OCI-LY7 (cell line): ENCODE measurements at regions of chr19 and their contacts with region 1.

Region 1: GRCh38 chr19:40777937-40778705 is at the start of gene RAB4B:
- DNase-seq: peak; percentile 100
- H3K4me3 ChIP-seq: peak within 1 kb of the TSS; percentile 73
- H3K27ac ChIP-seq: peak within 1 kb of the TSS; percentile 95
- H3K4me1 ChIP-seq: peaks cover 37% of the 10 kb centered on the region
- CTCF ChIP-seq: no peak
- total RNA-seq, gene RAB4B: 32.2 and 37.1 TPM in 2 replicates

Region 2: DNA sequence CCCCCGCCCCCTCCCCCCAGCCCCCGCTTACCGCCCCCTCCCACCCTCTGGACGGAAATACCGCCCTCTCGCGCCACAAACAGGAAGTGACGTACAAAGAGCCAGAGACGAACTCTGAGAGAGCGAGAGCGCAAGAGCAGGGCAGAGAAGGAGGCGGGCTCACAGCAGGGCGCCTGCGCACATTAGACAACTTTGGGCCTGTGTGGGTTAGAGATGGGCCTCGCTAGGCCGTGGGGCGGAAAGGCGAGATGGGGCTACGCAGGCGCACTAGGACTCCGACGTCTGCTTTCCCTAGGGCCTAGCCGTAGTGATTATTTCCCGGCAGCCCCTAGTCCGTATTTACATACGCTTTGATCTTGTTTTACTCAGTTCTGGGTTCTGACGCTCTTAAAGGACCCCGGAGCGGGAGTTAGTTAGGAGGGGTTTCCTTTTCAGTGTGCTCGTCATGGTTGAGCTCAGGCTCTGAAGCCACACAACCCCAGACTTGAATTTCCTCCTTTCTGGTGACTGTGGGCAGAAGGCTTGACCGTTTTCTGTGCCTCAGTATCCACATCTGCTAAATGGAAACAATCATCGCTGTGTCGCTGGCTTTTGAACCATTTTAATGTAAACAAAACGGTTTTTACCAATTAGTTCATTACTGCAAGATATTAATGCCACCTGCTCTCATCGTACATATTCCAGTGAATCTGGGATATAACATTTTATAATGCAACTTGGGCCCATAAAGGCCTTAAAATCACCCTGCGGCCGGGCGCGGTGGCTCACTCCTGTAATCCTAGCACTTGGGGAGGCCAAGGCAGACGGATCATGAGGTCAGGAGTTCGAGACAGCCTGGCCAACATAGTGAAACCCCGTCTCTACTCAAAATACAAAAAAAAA is 492.5 kb before region 1 on chr19:
- CTCF ChIA-PET with region 1: interaction called, 12 read pairs
- POLR2A ChIA-PET with region 1: no interaction called
- intact Hi-C with region 1: no loop called
- DNase-seq: peak; percentile 100
- H3K4me3 ChIP-seq: peak overlapping the region; percentile 85
- H3K27ac ChIP-seq: peak overlapping the region; percentile 94
- H3K4me1 ChIP-seq: peaks cover 54% of the 10 kb centered on the region
- CTCF ChIP-seq: no peak

Region 3: GRCh38 chr19:40603389-40604135 is 174.6 kb before region 1 on chr19:
- CTCF ChIA-PET with region 1: no interaction called
- POLR2A ChIA-PET with region 1: interaction called, 4 read pairs
- intact Hi-C with region 1: loop called (anchors 10 kb)
- DNase-seq: peak; percentile 98
- H3K4me3 ChIP-seq: peak overlapping the region; percentile 66
- H3K27ac ChIP-seq: no peak overlapping the region
- H3K4me1 ChIP-seq: peaks cover 62% of the 10 kb centered on the region
- CTCF ChIP-seq: no peak

Region 4: DNA sequence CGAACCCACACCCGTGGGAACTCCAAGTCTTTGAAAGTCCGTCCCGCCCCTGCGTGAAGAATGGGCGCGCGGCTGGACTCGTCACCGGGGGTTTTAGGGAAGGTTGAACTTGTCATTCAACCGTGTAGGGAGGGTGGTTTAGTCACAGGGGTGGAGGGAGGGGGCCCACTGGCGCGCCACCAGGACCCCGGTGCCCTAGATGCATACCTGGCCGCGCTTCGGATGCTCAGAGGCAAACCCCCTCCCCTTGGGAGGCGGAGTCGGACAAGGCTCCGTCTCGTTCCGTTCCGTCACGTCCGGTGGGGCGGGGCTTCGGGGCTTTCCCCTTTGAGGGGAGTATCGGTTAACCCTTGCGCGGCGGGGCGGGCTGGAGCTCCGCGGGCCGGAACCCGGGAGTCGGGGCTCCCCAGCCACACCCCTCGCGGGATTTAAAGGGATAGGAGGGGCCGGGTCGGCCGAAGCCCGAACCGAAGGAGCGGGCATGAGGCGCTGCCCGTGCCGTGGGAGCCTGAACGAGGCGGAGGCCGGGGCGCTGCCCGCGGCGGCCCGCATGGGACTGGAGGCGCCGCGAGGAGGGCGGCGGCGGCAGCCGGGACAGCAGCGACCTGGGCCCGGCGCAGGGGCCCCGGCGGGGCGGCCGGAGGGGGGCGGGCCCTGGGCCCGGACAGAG is 61.3 kb before region 1 on chr19 and contains the starts of genes COQ8B and ITPKC:
- CTCF ChIA-PET with region 1: no interaction called
- POLR2A ChIA-PET with region 1: interaction called, 3 read pairs
- intact Hi-C with region 1: loop called (anchors 1 kb)
- DNase-seq: peak; percentile 99
- H3K4me3 ChIP-seq: peak within 1 kb of the TSS; percentile 70
- H3K27ac ChIP-seq: peak within 1 kb of the TSS; percentile 72
- H3K4me1 ChIP-seq: peaks cover 37% of the 10 kb centered on the region
- CTCF ChIP-seq: no peak
- total RNA-seq, gene COQ8B: 34.9 and 39.3 TPM in 2 replicates
- total RNA-seq, gene ITPKC: 4.0 and 6.5 TPM in 2 replicates

Region 5: DNA sequence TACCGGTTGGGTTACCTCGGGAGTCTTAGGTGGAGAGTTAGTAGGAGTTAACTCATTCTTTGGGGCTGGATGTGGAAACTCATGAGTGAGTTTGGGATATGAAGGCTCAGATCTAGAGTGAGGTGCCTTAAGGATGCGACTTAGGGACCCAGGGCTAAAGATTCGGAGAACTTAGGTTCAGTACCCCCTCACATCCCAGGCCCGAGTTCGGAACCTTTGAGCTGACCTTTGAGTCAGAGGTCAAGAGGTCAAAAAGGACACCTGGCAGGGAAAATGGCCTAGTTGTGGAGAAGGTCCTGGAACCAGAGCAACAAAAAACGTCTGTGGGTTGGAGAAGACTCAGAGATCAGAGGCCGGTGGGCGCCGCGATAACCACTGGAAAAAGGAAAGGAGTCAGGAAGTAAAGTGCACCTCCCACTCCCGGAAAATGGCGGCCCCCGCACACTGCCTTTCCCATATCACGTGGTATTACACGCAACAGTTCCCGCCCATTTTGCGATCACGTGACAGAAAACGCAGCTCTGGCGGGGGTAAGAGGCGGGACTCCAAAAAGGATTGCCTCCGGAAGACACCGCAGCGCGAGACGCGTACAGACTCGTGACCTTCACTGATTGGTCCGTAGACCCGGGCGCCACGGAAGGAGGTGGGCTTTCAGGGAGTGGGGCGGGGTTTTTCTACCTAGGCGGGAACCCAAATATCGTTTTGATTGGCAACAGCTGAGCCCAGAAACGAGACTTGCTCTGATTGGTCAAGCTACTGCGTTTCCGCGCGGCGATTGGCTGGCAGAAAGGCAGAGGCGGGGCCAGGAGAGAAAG is 27.9 kb before region 1 on chr19 and contains the start of gene ACTMAP:
- CTCF ChIA-PET with region 1: interaction called, 3 read pairs
- POLR2A ChIA-PET with region 1: interaction called, 31 read pairs
- intact Hi-C with region 1: loop called (anchors 1 kb)
- DNase-seq: peak; percentile 100
- H3K4me3 ChIP-seq: peak within 1 kb of the TSS; percentile 80
- H3K27ac ChIP-seq: peak within 1 kb of the TSS; percentile 79
- H3K4me1 ChIP-seq: peaks cover 45% of the 10 kb centered on the region
- CTCF ChIP-seq: no peak
- total RNA-seq, gene ACTMAP: 3.3 and 5.0 TPM in 2 replicates

Region 6: GRCh38 chr19:40791996-40792391 is 13.9 kb after region 1 on chr19:
- CTCF ChIA-PET with region 1: interaction called, 6 read pairs
- POLR2A ChIA-PET with region 1: interaction called, 17 read pairs
- intact Hi-C with region 1: no loop called
- DNase-seq: peak; percentile 48
- H3K4me3 ChIP-seq: peak overlapping the region; percentile 33
- H3K27ac ChIP-seq: peak overlapping the region; percentile 46
- H3K4me1 ChIP-seq: peaks cover 41% of the 10 kb centered on the region
- CTCF ChIP-seq: no peak

Region 7: GRCh38 chr19:40798223-40798996 is 20.3 kb after region 1 on chr19:
- CTCF ChIA-PET with region 1: interaction called, 6 read pairs
- POLR2A ChIA-PET with region 1: interaction called, 16 read pairs
- intact Hi-C with region 1: loop called (anchors 1 kb)
- DNase-seq: peak; percentile 100
- H3K4me3 ChIP-seq: peak overlapping the region; percentile 62
- H3K27ac ChIP-seq: peak overlapping the region; percentile 57
- H3K4me1 ChIP-seq: peaks cover 53% of the 10 kb centered on the region
- CTCF ChIP-seq: peak; percentile 63

Region 8: DNA sequence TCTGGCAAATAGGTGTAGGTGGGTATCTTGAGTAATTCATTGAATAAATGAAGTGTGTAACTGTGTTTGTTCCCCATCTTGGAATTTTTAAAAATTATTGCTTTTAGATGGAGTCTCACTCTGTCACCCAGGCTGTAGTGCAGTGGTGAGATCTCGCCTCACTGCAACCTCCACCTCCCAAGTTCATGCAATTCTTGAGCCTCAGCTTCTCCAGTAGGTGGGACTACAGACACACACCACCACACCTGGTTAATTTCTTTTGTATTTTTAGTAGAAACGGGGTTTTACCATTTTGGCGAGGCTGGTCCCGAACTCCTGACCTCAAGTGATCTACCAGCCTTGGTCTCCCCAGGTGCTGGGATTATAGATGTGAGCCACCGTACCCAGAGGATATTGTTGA is 80.0 kb after region 1 on chr19:
- CTCF ChIA-PET with region 1: no interaction called
- POLR2A ChIA-PET with region 1: no interaction called
- intact Hi-C with region 1: no loop called
- DNase-seq: no peak
- H3K4me3 ChIP-seq: no peak overlapping the region
- H3K27ac ChIP-seq: no peak overlapping the region
- H3K4me1 ChIP-seq: no peaks in the 10 kb centered on the region
- CTCF ChIP-seq: no peak

Region 9: GRCh38 chr19:41089955-41090354 is 311.8 kb after region 1 on chr19:
- CTCF ChIA-PET with region 1: no interaction called
- POLR2A ChIA-PET with region 1: no interaction called
- intact Hi-C with region 1: no loop called
- DNase-seq: no peak
- H3K4me3 ChIP-seq: no peak overlapping the region
- H3K27ac ChIP-seq: no peak overlapping the region
- H3K4me1 ChIP-seq: no peaks in the 10 kb centered on the region
- CTCF ChIP-seq: no peak